Activated CD4-positive, alpha-beta T cell treated with anti-CD3 and anti-CD28 coated beads for 36 hours (primary cell): ENCODE measurements at regions of chr7 and their contacts with region 1.

Region 1: GRCh38 chr7:118183786-118184564 is at the start of gene LSM8:
- DNase-seq: peak; percentile 98
- ATAC-seq: peak; percentile 99
- H3K4me3 Mint-ChIP-seq: peak within 1 kb of the TSS; percentile 99
- H3K27ac Mint-ChIP-seq: peak within 1 kb of the TSS; percentile 100
- H3K4me1 Mint-ChIP-seq: peaks cover 34% of the 10 kb centered on the region
- H3K27me3 Mint-ChIP-seq: no peaks in the 10 kb centered on the region
- total RNA-seq, gene LSM8: 35.0 to 49.9 TPM

Region 2: GRCh38 chr7:116953727-116954442 is 1230.1 kb before region 1 on chr7:
- CTCF ChIA-PET with region 1: no interaction called
- POLR2A ChIA-PET with region 1: no interaction called
- intact Hi-C with region 1: loop called in 1 of 2 experiments (anchors 2 kb)
- DNase-seq: peak; percentile 43
- ATAC-seq: peak; percentile 54
- H3K4me3 Mint-ChIP-seq: peak overlapping the region; percentile 93
- H3K27ac Mint-ChIP-seq: peak overlapping the region; percentile 97
- H3K4me1 Mint-ChIP-seq: peaks cover 31% of the 10 kb centered on the region
- H3K27me3 Mint-ChIP-seq: no peaks in the 10 kb centered on the region

Region 3: GRCh38 chr7:117470777-117471176 is 713.2 kb before region 1 on chr7:
- CTCF ChIA-PET with region 1: no interaction called
- POLR2A ChIA-PET with region 1: no interaction called
- intact Hi-C with region 1: no loop called
- DNase-seq: no peak
- ATAC-seq: no peak
- H3K4me3 Mint-ChIP-seq: no peak overlapping the region
- H3K27ac Mint-ChIP-seq: no peak overlapping the region
- H3K4me1 Mint-ChIP-seq: no peaks in the 10 kb centered on the region
- H3K27me3 Mint-ChIP-seq: peaks cover 1% of the 10 kb centered on the region

Region 4: GRCh38 chr7:117666016-117666415 is 518.0 kb before region 1 on chr7:
- CTCF ChIA-PET with region 1: no interaction called
- POLR2A ChIA-PET with region 1: no interaction called
- intact Hi-C with region 1: no loop called
- DNase-seq: no peak
- ATAC-seq: no peak
- H3K4me3 Mint-ChIP-seq: no peak overlapping the region
- H3K27ac Mint-ChIP-seq: no peak overlapping the region
- H3K4me1 Mint-ChIP-seq: no peaks in the 10 kb centered on the region
- H3K27me3 Mint-ChIP-seq: peaks cover 1% of the 10 kb centered on the region

Region 5: DNA sequence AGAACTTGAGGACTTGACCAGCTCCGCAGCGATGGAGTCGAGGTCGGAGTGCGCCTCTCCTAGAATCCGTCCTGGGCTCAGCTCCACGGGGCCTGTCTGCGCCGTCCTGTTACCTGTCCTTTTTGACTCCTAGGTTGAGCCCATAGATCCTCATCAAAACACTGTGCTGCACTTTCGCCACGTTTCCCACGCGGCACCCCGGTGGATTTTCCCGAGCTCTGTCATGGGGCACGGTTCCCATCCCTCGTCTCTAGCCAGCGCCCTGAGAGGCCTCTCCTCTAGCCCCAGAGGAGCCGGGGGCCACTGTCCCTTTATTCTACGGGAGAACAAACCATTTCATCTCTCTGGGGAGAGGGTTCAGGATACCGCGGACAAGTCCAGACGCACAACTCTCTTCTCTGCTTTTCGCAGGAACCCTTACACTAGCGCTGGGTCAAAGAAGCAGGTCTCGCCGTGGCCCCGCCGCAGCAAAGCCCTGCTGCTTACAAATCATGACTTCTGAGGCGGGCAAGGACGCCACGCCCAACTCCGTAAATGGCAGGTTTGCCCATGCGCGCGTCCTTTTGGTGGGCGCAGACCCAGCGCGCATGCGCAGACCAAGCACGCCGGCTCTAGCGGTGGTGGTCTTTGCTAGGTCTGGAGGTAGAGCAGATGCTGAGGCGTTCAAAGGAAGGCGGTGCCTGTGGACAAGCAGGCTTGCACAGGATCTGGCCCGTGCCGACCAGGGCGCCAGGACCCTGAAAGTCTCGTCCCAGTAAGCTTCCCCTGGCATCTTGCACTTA is 30.3 kb after region 1 on chr7:
- CTCF ChIA-PET with region 1: no interaction called
- POLR2A ChIA-PET with region 1: no interaction called
- intact Hi-C with region 1: loop called in 1 of 2 experiments (anchors 2 kb)
- DNase-seq: peak; percentile 79
- ATAC-seq: peak; percentile 92
- H3K4me3 Mint-ChIP-seq: peak overlapping the region; percentile 78
- H3K27ac Mint-ChIP-seq: peak overlapping the region; percentile 68
- H3K4me1 Mint-ChIP-seq: peaks cover 12% of the 10 kb centered on the region
- H3K27me3 Mint-ChIP-seq: peaks cover 23% of the 10 kb centered on the region